ENCODE measurements at regions of chr2 and their contacts with region 1.

Region 1: DNA sequence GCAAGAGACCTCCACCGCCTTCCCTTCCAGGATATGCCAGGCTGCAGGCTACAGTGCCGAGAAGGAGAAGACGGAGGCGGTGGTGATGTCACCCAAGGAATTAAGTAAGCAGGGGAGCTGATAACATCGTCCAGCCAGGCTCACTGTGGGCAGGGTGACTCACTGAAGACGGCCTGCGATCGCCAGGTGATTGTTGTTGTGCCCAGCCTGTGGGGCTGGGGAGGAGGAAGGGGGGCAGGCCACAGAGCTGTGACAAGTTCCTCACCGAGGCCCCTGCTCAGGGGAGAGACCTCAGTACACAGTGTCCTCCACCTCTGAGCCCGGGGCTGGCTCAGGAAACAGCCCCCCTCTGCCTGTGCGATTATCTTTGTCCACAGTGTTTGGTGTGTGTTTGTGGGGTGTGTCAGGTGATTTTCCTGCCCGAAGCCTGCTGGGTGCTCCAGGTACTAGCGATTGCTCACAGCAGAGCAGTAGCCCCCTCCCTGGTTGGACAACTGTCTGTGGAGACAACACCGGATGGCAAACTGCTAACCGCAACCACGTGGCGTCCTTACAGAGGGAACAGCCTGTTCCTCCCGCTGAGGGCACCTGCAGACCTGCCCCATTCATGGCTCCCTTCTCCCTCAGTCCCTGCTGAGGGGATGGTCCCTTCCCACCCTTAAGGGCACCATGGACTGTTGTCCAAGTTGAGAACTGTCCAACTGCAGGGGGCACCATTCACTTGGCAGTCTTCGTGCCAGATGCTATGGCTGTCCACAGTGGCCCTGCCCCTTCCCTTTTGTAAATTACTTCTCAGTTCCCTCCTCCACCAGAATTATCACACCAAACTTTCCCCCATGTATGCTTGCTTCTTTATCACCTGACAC is 95.1 kb downstream of the ZFP36L2 start:
- DNase-seq: peak; percentile 73
- H3K4me3 Mint-ChIP-seq: peak overlapping the region; percentile 45
- H3K27ac Mint-ChIP-seq: peak overlapping the region; percentile 83
- H3K4me1 Mint-ChIP-seq: peaks cover 83% of the 10 kb centered on the region
- H3K27me3 Mint-ChIP-seq: no peaks in the 10 kb centered on the region

Region 2: DNA sequence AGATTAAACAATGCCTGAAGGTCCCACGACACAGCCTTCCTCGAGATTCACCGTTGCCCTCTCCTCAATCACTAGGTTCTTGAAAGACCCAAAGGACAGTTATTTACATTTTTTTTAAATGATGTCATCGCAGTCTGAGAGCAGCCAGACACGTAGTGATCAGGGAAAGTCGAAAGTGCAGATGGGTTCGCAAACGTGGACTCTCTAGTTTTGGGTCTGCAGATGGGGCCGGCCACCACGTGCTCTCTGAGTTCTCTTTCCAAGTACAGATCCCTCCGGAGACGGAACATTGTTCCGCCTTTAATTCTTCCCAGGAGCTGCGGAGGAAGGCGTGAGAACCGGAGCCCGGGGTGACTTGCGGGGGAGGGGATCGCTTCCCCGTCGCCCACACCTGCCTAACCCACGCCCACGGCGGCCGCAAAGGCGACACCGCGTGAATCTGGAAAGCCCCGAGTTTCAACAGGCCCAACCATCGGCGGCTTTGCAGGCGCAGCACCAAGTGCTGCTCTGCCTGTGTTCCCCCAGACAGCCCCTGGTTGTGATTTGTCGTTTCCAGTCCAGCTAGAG is 1029.2 kb before region 1 on chr2:
- intact Hi-C with region 1: loop called (anchors 10 kb)
- DNase-seq: peak; percentile 92
- H3K4me3 Mint-ChIP-seq: peak overlapping the region; percentile 73
- H3K27ac Mint-ChIP-seq: peak overlapping the region; percentile 94
- H3K4me1 Mint-ChIP-seq: peaks cover 45% of the 10 kb centered on the region
- H3K27me3 Mint-ChIP-seq: no peaks in the 10 kb centered on the region

Region 3: DNA sequence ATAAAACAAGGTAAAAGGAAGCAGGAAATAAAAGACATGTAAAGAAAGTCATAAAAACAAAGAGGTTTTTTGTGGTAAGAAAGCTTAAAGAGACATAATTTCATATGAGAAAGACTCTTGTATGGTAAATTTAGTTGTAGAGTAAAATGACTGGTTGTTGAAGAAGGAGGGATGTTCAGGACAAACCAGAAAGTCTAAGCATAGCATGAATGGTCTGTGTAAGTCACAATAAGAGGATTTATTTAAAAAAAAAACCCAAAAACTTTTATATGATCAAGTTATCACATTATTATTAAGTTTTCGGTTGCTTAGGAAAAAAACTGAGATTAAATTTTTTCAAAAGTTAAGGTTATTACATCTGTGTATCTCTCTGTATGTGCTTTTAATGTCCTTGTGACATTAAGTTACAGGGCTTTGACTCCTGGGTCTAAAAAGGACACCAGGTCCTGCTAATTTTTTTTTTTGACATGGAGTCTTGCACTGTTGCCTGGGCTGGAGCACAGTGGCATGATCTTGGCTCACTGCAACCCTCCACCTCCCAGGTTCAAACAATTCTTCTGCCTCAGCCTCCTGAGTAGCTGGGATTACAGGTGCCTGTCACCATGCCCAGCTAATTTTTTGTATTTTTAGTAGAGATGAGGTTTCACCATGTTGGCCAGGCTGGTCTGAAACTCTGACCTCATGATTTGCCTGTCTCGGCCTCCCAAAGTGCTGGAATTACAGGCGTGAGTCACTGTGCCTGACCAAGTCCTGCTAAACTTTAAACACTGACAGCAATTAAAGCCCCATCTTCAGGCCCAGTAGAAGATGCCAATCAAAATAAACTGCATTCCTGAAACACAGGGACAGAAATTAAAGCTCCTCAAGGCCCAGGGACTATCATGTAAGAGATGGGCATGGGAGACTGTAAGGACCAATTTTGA is 353.1 kb before region 1 on chr2:
- intact Hi-C with region 1: no loop called
- DNase-seq: no peak
- H3K4me3 Mint-ChIP-seq: no peak overlapping the region
- H3K27ac Mint-ChIP-seq: no peak overlapping the region
- H3K4me1 Mint-ChIP-seq: peaks cover 9% of the 10 kb centered on the region
- H3K27me3 Mint-ChIP-seq: no peaks in the 10 kb centered on the region

Region 4: GRCh38 chr2:43149482-43150107 is 18.3 kb after region 1 on chr2:
- intact Hi-C with region 1: loop called (anchors 1 kb)
- DNase-seq: no peak
- H3K4me3 Mint-ChIP-seq: peak overlapping the region; percentile 31
- H3K27ac Mint-ChIP-seq: peak overlapping the region; percentile 87
- H3K4me1 Mint-ChIP-seq: peaks cover 45% of the 10 kb centered on the region
- H3K27me3 Mint-ChIP-seq: no peaks in the 10 kb centered on the region

Region 5: GRCh38 chr2:43194121-43194869 is 63.0 kb after region 1 on chr2:
- intact Hi-C with region 1: loop called (anchors 1 kb)
- DNase-seq: no peak
- H3K4me3 Mint-ChIP-seq: peak overlapping the region; percentile 79
- H3K27ac Mint-ChIP-seq: peak overlapping the region; percentile 92
- H3K4me1 Mint-ChIP-seq: peaks cover 51% of the 10 kb centered on the region
- H3K27me3 Mint-ChIP-seq: no peaks in the 10 kb centered on the region

Region 6: GRCh38 chr2:43387092-43388062 is 256.1 kb after region 1 on chr2:
- intact Hi-C with region 1: loop called (anchors 5 kb)
- DNase-seq: no peak
- H3K4me3 Mint-ChIP-seq: no peak overlapping the region
- H3K27ac Mint-ChIP-seq: peak overlapping the region; percentile 50
- H3K4me1 Mint-ChIP-seq: peaks cover 27% of the 10 kb centered on the region
- H3K27me3 Mint-ChIP-seq: no peaks in the 10 kb centered on the region

Region 7: GRCh38 chr2:43542285-43542937 is 411.2 kb after region 1 on chr2:
- intact Hi-C with region 1: loop called (anchors 1 kb)
- DNase-seq: no peak
- H3K4me3 Mint-ChIP-seq: no peak overlapping the region
- H3K27ac Mint-ChIP-seq: no peak overlapping the region
- H3K4me1 Mint-ChIP-seq: peaks cover 18% of the 10 kb centered on the region
- H3K27me3 Mint-ChIP-seq: no peaks in the 10 kb centered on the region

Measured in activated T-helper 1 cell treated with anti-CD3 and anti-CD28 coated beads, Interleukin-12 subunit alpha, Interleukin-12 subunit beta, Interleukin-2, Interleukin-4 antibody, amounts not matched to agents 30 ng/mL and 10 ng/mL and 1 ng/mL, durations not matched to agents 14 hours and 24 hours and 36 hours (primary cell).